WTC11 (cell line): ENCODE measurements at regions of chr2 and their contacts with region 1.

Region 1: GRCh38 chr2:69724540-69725159 is 17.3 kb upstream of the ANXA4 start:
- DNase-seq: peak; percentile 92
- ATAC-seq: peak; percentile 90
- H3K4me3 Mint-ChIP-seq: peak overlapping the region; percentile 70
- H3K27ac Mint-ChIP-seq: no peak overlapping the region
- H3K4me1 Mint-ChIP-seq: no peaks in the 10 kb centered on the region
- H3K27me3 Mint-ChIP-seq: no peaks in the 10 kb centered on the region
- CTCF ChIP-seq: peak; percentile 92

Region 2: GRCh38 chr2:69559442-69560146 is 165.1 kb before region 1 on chr2:
- CTCF ChIA-PET with region 1: interaction called, 30 read pairs
- POLR2A ChIA-PET with region 1: no interaction called
- DNase-seq: peak; percentile 18
- ATAC-seq: peak; percentile 98
- H3K4me3 Mint-ChIP-seq: no peak overlapping the region
- H3K27ac Mint-ChIP-seq: peak overlapping the region; percentile 50
- H3K4me1 Mint-ChIP-seq: peaks cover 4% of the 10 kb centered on the region
- H3K27me3 Mint-ChIP-seq: no peaks in the 10 kb centered on the region
- CTCF ChIP-seq: peak; percentile 23; the same call in 1 of the 2 replicates

Region 3: GRCh38 chr2:69741619-69742466 is 17.2 kb after region 1 on chr2 and contains the start of gene ANXA4:
- CTCF ChIA-PET with region 1: interaction called, 40 read pairs
- POLR2A ChIA-PET with region 1: interaction called, 4 read pairs
- DNase-seq: peak; percentile 67
- ATAC-seq: peak; percentile 73
- H3K4me3 Mint-ChIP-seq: peak within 1 kb of the TSS; percentile 83
- H3K27ac Mint-ChIP-seq: peak within 1 kb of the TSS; percentile 66
- H3K4me1 Mint-ChIP-seq: peaks cover 14% of the 10 kb centered on the region
- H3K27me3 Mint-ChIP-seq: peaks cover 28% of the 10 kb centered on the region
- CTCF ChIP-seq: no peak
- total RNA-seq, gene ANXA4: 9.5 to 13.6 TPM (median 12.3 TPM) in 3 replicates

Region 4: DNA sequence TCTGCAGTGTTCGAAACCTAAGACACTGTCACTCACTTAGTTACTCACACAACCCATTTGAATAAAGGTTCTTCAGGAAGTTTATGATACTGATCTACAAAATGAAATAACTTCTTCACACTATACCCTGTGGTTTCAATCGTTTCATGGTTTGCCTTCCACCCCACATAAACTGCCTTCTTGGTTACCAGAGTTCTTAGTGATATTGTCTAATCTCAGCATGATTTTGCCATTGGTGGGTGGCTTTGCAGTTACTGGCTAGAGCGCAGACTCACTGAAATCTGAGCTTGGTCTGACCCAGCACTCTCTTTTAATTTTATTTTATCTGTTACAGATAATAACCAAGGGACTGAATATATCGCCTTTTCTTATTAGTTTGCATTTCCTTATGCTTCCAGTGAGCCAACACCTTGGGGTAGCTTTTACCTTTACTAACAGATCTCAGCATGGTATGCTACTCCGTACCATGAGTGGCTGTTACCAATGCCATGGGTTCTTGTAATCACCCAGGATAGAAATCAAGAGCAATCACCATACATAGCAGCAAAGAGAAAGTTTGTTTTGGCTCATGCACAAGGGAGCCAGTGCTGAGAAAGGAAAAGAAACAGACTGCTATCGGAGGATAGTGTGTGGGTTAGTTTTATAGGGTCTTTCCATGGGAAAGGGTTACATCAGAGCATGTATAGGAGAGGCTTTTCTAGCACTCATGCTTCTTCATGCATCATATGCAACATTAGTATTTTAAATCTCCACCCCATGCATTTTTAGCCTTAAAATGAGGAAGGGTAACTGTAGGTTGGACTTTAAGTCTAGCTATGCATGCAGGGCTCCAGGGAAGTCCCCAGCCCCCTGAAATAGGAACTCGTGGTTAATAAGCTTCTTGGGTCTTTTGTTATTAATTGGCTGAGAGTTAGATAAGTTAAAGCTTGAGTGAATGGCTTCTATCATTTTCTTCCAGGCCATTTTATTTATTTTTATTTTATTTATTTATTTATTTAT is 50.6 kb after region 1 on chr2:
- CTCF ChIA-PET with region 1: interaction called, 21 read pairs
- POLR2A ChIA-PET with region 1: no interaction called
- DNase-seq: no peak
- ATAC-seq: no peak
- H3K4me3 Mint-ChIP-seq: no peak overlapping the region
- H3K27ac Mint-ChIP-seq: peak overlapping the region; percentile 81
- H3K4me1 Mint-ChIP-seq: peaks cover 64% of the 10 kb centered on the region
- H3K27me3 Mint-ChIP-seq: no peaks in the 10 kb centered on the region
- CTCF ChIP-seq: no peak

Region 5: DNA sequence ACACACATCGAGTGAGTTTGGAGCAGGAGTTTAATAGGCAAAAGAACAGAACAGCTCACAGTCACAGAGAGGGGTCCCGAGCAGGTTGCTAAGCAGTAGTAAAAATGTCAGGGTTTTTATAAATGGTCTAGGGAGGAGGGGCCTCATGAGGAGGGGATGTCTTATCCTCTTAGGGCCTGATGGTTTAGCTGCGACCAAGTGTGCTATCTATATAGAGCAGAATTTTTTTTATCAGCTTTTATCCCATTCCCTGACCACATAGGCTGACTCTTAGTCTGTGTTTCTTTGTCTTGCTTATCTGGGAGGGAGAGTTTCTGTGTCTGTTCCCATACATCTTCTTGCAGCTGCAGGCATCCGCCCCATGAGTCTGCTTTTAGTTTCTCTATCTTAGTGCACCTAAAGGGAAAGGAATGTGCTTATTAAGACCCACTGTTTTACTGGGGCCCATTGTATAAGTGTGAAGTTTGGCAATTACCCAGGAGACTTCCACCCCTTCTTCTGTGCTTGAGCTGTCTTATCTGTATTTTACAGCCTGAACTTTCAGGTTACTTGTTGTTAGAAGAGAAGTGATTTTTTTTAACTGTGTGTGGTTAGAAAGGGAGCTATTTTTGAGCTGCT is 74.4 kb after region 1 on chr2:
- CTCF ChIA-PET with region 1: interaction called, 25 read pairs
- POLR2A ChIA-PET with region 1: no interaction called
- DNase-seq: no peak
- ATAC-seq: peak; percentile 22
- H3K4me3 Mint-ChIP-seq: no peak overlapping the region
- H3K27ac Mint-ChIP-seq: peak overlapping the region; percentile 34; the same call in 1 of the 2 replicates
- H3K4me1 Mint-ChIP-seq: peaks cover 17% of the 10 kb centered on the region
- H3K27me3 Mint-ChIP-seq: no peaks in the 10 kb centered on the region
- CTCF ChIP-seq: no peak

Region 6: GRCh38 chr2:69829256-69830046 is 104.8 kb after region 1 on chr2 and contains the start of gene GMCL1:
- CTCF ChIA-PET with region 1: interaction called, 22 read pairs
- POLR2A ChIA-PET with region 1: interaction called, 3 read pairs
- DNase-seq: peak; percentile 98
- ATAC-seq: peak; percentile 94
- H3K4me3 Mint-ChIP-seq: peak within 1 kb of the TSS; percentile 87
- H3K27ac Mint-ChIP-seq: peak within 1 kb of the TSS; percentile 96
- H3K4me1 Mint-ChIP-seq: peaks cover 21% of the 10 kb centered on the region
- H3K27me3 Mint-ChIP-seq: no peaks in the 10 kb centered on the region
- CTCF ChIP-seq: no peak
- total RNA-seq, gene GMCL1: 17.2 to 21.6 TPM (median 20.5 TPM) in 3 replicates

Region 7: GRCh38 chr2:69914170-69914960 is 189.7 kb after region 1 on chr2:
- CTCF ChIA-PET with region 1: interaction called, 52 read pairs
- POLR2A ChIA-PET with region 1: no interaction called
- DNase-seq: peak; percentile 100
- ATAC-seq: peak; percentile 93
- H3K4me3 Mint-ChIP-seq: peak overlapping the region; percentile 71
- H3K27ac Mint-ChIP-seq: peak overlapping the region; percentile 70
- H3K4me1 Mint-ChIP-seq: peaks cover 4% of the 10 kb centered on the region; the same call in 1 of the 2 replicates
- H3K27me3 Mint-ChIP-seq: no peaks in the 10 kb centered on the region
- CTCF ChIP-seq: no peak